GM12878 (cell line): ENCODE measurements at regions of chr9 and their contacts with region 1.

Region 1: DNA sequence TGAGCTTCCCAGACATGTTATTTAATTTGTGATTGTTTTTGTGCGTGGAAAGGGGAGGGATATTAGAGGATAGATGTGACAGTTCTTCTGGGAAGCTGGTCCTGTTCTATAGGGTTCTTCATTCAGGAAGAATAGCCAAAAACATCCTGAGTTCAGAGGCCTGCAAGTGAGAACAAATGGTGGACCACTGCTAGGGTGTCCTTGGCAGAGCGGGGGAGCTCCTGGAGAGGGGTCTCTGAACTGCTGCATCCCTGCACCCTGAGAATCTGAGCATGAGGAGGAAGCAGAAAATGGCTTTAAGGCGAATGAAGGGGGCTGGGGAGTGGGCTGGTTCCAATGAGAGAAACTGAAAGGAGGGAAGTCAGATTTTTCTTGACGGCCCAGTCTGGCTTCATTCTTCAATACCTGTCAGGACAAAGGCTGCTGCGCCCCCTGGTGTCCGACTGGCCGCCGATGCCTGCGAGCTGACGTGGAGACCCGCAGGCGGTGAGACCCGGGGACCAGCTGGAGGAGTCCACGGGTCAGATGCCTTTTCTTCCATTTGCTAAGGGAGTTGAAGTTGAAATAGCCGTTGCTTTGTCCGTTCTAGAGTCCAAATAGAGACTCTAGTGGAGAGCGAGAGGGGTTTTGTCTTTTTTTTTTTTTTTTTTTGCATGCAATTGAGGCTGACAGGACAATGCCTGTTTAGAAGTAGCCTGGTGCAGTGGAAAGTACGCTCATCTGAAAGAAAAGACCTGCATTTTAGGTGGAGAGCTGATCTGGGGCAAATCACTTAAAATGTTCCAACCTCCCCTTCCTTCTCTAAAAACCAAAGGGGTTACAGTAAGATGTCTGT is 39.5 kb upstream of the NFIB start:
- DNase-seq: no peak
- ATAC-seq: peak; percentile 96
- H3K4me3 ChIP-seq: no peak overlapping the region
- H3K27ac ChIP-seq: no peak overlapping the region
- H3K4me1 ChIP-seq: no peaks in the 10 kb centered on the region
- H3K27me3 ChIP-seq: peaks cover 14 to 16% of the 10 kb centered on the region in 2 experiments
- CTCF ChIP-seq: peak; percentile 78 to 93 (median 88)
- EP300 ChIP-seq: no peak
- POLR2A ChIP-seq: no peak
- RAD21 ChIP-seq: peak; percentile 80

Region 2: DNA sequence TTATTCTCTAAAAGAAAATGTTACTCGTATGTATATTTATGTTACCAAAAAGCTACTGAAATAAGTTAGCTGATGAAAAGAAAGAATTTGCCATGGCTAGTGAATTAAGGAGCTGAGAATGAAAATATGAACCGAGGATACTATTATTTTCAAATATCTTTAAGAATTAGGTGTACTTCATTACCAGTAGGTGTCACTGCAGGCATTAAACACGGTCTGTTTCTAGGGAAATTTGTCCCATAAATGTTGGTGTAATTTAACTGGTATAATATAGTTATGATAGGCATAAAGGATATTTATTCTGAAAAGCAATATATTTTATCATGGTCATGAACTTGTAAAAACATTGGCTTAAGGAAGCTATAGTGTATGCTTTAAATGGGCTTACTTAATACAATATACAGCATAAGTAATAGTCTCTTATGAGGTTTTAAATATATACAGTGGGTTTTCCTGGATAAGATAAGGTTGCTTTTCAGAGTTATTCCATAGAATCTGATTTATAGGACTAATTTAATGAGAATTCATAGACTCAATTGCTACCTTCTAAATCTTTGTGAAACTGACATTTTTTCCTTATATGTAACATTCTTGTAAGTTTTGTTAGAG is 1001.6 kb before region 1 on chr9:
- CTCF ChIA-PET with region 1: interaction called, 4 read pairs
- POLR2A ChIA-PET with region 1: no interaction called
- RAD21 ChIA-PET with region 1: interaction called, 3 read pairs
- SMC1A ChIA-PET with region 1: no interaction called
- in situ Hi-C with region 1: no loop called
- intact Hi-C with region 1: loop called (anchors 5 kb)
- DNase-seq: no peak
- ATAC-seq: peak; percentile 41
- H3K4me3 ChIP-seq: no peak overlapping the region
- H3K27ac ChIP-seq: no peak overlapping the region
- H3K4me1 ChIP-seq: no peaks in the 10 kb centered on the region
- H3K27me3 ChIP-seq: no peaks in the 10 kb centered on the region
- CTCF ChIP-seq: peak; percentile 18 to 39 (median 26); a peak in 4 of 6 replicates
- EP300 ChIP-seq: no peak
- POLR2A ChIP-seq: no peak
- RAD21 ChIP-seq: peak; percentile 50

Region 3: GRCh38 chr9:13427587-13427986 is 925.9 kb before region 1 on chr9:
- CTCF ChIA-PET with region 1: interaction called, 97 read pairs
- POLR2A ChIA-PET with region 1: no interaction called
- RAD21 ChIA-PET with region 1: interaction called, 27 read pairs
- SMC1A ChIA-PET with region 1: interaction called, 45 read pairs
- in situ Hi-C with region 1: loop called (anchors 5 kb)
- intact Hi-C with region 1: loop called (anchors 1 kb)
- DNase-seq: no peak
- ATAC-seq: 0 out of 3 replicates have a peak, but pooled peaks have one; percentile 35
- H3K4me3 ChIP-seq: no peak overlapping the region
- H3K27ac ChIP-seq: no peak overlapping the region
- H3K4me1 ChIP-seq: no peaks in the 10 kb centered on the region
- H3K27me3 ChIP-seq: no peaks in the 10 kb centered on the region; a peak in 1 of 4 replicates
- CTCF ChIP-seq: peak; percentile 49 to 71 (median 50); a peak in 5 of 6 replicates
- EP300 ChIP-seq: no peak
- POLR2A ChIP-seq: no peak
- RAD21 ChIP-seq: peak; percentile 76

Region 4: GRCh38 chr9:13568841-13569601 is 784.4 kb before region 1 on chr9:
- CTCF ChIA-PET with region 1: no interaction called
- POLR2A ChIA-PET with region 1: no interaction called
- RAD21 ChIA-PET with region 1: no interaction called
- SMC1A ChIA-PET with region 1: no interaction called
- in situ Hi-C with region 1: no loop called
- intact Hi-C with region 1: no loop called
- DNase-seq: no peak
- ATAC-seq: no peak
- H3K4me3 ChIP-seq: 0 out of 2 replicates have a peak overlapping the region, but pooled peaks have one; percentile 11
- H3K27ac ChIP-seq: no peak overlapping the region
- H3K4me1 ChIP-seq: no peaks in the 10 kb centered on the region
- H3K27me3 ChIP-seq: no peaks in the 10 kb centered on the region; a peak in 1 of 4 replicates
- CTCF ChIP-seq: no peak
- EP300 ChIP-seq: no peak
- POLR2A ChIP-seq: no peak
- RAD21 ChIP-seq: no peak

Region 5: DNA sequence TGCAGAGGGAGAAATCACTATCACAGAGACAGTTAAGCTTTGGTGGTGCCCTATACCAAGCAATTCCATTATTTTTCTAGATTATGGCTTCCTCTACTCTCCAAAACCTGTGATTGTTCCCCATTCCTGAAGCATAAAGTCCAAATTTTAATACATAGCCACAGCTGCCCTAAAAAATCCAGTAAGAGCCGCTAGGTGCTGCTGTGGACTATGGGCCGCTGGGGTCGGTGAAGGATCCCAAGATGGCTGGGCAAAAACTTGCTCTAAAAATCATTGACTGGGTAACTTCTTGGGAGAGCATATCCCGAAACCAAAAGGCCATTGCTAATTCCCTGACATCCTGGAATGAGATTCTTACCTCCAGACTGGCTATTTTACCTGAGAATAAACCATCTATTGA is 284.7 kb before region 1 on chr9:
- CTCF ChIA-PET with region 1: interaction called, 10 read pairs
- POLR2A ChIA-PET with region 1: no interaction called
- RAD21 ChIA-PET with region 1: interaction called, 3 read pairs
- SMC1A ChIA-PET with region 1: interaction called, 3 read pairs
- in situ Hi-C with region 1: no loop called
- intact Hi-C with region 1: loop called (anchors 2 kb)
- DNase-seq: no peak
- ATAC-seq: no peak
- H3K4me3 ChIP-seq: no peak overlapping the region
- H3K27ac ChIP-seq: no peak overlapping the region
- H3K4me1 ChIP-seq: no peaks in the 10 kb centered on the region
- H3K27me3 ChIP-seq: no peaks in the 10 kb centered on the region
- CTCF ChIP-seq: peak in 2 of 3 experiments; percentile 4 to 29; a peak in 2 of 6 replicates
- EP300 ChIP-seq: no peak
- POLR2A ChIP-seq: no peak
- RAD21 ChIP-seq: peak; percentile 44

Region 6: DNA sequence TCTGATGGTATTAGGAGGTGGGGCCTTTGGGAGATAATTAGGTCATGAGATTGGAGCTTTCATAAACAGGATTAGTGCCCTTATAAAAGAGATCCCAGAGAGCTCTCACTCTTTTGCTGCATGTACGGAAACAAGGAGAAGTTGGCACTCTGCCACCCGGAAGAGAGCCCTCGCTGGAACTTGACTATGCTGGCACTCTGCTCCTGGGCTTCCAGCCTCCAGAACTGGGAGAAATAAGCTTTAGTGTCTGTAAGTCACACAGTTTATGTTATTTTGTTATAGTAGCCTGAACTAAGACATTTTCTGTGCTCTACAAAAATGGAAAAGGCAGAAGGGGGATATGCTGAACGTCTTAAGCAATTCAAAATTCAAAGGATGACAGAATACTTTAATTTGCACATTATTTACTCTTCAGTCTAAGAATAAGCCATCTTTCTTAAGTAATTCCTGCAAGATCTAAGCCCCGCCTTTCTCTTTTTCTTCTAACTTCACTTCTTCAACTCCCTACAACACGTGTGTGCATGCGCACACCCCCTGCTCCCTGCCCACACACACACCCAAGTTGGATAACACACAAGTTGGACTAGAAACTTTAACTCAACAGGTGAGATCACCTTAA is 56.8 kb before region 1 on chr9:
- CTCF ChIA-PET with region 1: no interaction called
- POLR2A ChIA-PET with region 1: no interaction called
- RAD21 ChIA-PET with region 1: no interaction called
- SMC1A ChIA-PET with region 1: interaction called, 3 read pairs
- in situ Hi-C with region 1: no loop called
- intact Hi-C with region 1: loop called (anchors 10 kb)
- DNase-seq: no peak
- ATAC-seq: no peak
- H3K4me3 ChIP-seq: no peak overlapping the region
- H3K27ac ChIP-seq: no peak overlapping the region
- H3K4me1 ChIP-seq: no peaks in the 10 kb centered on the region
- H3K27me3 ChIP-seq: no peaks in the 10 kb centered on the region
- CTCF ChIP-seq: no peak
- EP300 ChIP-seq: no peak
- POLR2A ChIP-seq: no peak
- RAD21 ChIP-seq: no peak

Region 7: GRCh38 chr9:14323083-14323971 is 30.1 kb before region 1 on chr9:
- CTCF ChIA-PET with region 1: interaction called, 11 read pairs
- POLR2A ChIA-PET with region 1: no interaction called
- RAD21 ChIA-PET with region 1: interaction called, 4 read pairs
- SMC1A ChIA-PET with region 1: interaction called, 3 read pairs
- in situ Hi-C with region 1: no loop called
- intact Hi-C with region 1: no loop called
- DNase-seq: no peak
- ATAC-seq: no peak; the same call in 2 of the 3 replicates
- H3K4me3 ChIP-seq: peak overlapping the region; percentile 86
- H3K27ac ChIP-seq: no peak overlapping the region
- H3K4me1 ChIP-seq: peaks cover 2% of the 10 kb centered on the region; the same call in 1 of the 2 replicates
- H3K27me3 ChIP-seq: no peaks in the 10 kb centered on the region
- CTCF ChIP-seq: no peak
- EP300 ChIP-seq: no peak
- POLR2A ChIP-seq: no peak
- RAD21 ChIP-seq: no peak

Region 8: GRCh38 chr9:14369011-14369410 is 15.6 kb after region 1 on chr9:
- CTCF ChIA-PET with region 1: interaction called, 10 read pairs
- POLR2A ChIA-PET with region 1: no interaction called
- RAD21 ChIA-PET with region 1: no interaction called
- SMC1A ChIA-PET with region 1: no interaction called
- in situ Hi-C with region 1: no loop called
- intact Hi-C with region 1: no loop called
- DNase-seq: no peak
- ATAC-seq: no peak
- H3K4me3 ChIP-seq: no peak overlapping the region
- H3K27ac ChIP-seq: no peak overlapping the region
- H3K4me1 ChIP-seq: no peaks in the 10 kb centered on the region
- H3K27me3 ChIP-seq: no peaks in the 10 kb centered on the region
- CTCF ChIP-seq: no peak
- EP300 ChIP-seq: no peak
- POLR2A ChIP-seq: no peak
- RAD21 ChIP-seq: no peak